SK-N-SH (cell line): ENCODE measurements at regions of chr9 and their contacts with region 1.

Region 1: GRCh38 chr9:87684627-87685219 is 41.2 kb upstream of the CTSL start:
- DNase-seq: peak; percentile 77
- H3K4me3 ChIP-seq: no peak overlapping the region
- H3K27ac ChIP-seq: no peak overlapping the region
- H3K4me1 ChIP-seq: no peaks in the 10 kb centered on the region
- H3K27me3 ChIP-seq: no peaks in the 10 kb centered on the region
- CTCF ChIP-seq: peak; percentile 82
- EP300 ChIP-seq: no peak
- RAD21 ChIP-seq: peak; percentile 74

Region 2: GRCh38 chr9:87701931-87702421 is 17.3 kb after region 1 on chr9:
- CTCF ChIA-PET with region 1: interaction called, 10 read pairs
- POLR2A ChIA-PET with region 1: no interaction called
- DNase-seq: no peak
- H3K4me3 ChIP-seq: no peak overlapping the region
- H3K27ac ChIP-seq: no peak overlapping the region
- H3K4me1 ChIP-seq: no peaks in the 10 kb centered on the region; a peak in 1 of 4 replicates
- H3K27me3 ChIP-seq: no peaks in the 10 kb centered on the region
- CTCF ChIP-seq: no peak
- EP300 ChIP-seq: no peak
- RAD21 ChIP-seq: no peak

Region 3: GRCh38 chr9:87742813-87743428 is 58.2 kb after region 1 on chr9:
- CTCF ChIA-PET with region 1: no interaction called
- POLR2A ChIA-PET with region 1: no interaction called
- DNase-seq: no peak
- H3K4me3 ChIP-seq: no peak overlapping the region
- H3K27ac ChIP-seq: no peak overlapping the region
- H3K4me1 ChIP-seq: no peaks in the 10 kb centered on the region; a peak in 2 of 4 replicates
- H3K27me3 ChIP-seq: no peaks in the 10 kb centered on the region
- CTCF ChIP-seq: no peak
- EP300 ChIP-seq: no peak
- RAD21 ChIP-seq: no peak

Region 4: GRCh38 chr9:87812375-87813118 is 127.8 kb after region 1 on chr9:
- CTCF ChIA-PET with region 1: interaction called, 44 read pairs
- POLR2A ChIA-PET with region 1: no interaction called
- DNase-seq: peak; percentile 60
- H3K4me3 ChIP-seq: peak overlapping the region in 1 of 2 experiments; percentile 5; a peak in 1 of 4 replicates
- H3K27ac ChIP-seq: no peak overlapping the region
- H3K4me1 ChIP-seq: no peaks in the 10 kb centered on the region
- H3K27me3 ChIP-seq: no peaks in the 10 kb centered on the region
- CTCF ChIP-seq: peak; percentile 78
- EP300 ChIP-seq: no peak
- RAD21 ChIP-seq: peak; percentile 81